Posterior vena cava (tissue), 2 donors: ENCODE measurements at regions of chr10 and their contacts with region 1.

Region 1: DNA sequence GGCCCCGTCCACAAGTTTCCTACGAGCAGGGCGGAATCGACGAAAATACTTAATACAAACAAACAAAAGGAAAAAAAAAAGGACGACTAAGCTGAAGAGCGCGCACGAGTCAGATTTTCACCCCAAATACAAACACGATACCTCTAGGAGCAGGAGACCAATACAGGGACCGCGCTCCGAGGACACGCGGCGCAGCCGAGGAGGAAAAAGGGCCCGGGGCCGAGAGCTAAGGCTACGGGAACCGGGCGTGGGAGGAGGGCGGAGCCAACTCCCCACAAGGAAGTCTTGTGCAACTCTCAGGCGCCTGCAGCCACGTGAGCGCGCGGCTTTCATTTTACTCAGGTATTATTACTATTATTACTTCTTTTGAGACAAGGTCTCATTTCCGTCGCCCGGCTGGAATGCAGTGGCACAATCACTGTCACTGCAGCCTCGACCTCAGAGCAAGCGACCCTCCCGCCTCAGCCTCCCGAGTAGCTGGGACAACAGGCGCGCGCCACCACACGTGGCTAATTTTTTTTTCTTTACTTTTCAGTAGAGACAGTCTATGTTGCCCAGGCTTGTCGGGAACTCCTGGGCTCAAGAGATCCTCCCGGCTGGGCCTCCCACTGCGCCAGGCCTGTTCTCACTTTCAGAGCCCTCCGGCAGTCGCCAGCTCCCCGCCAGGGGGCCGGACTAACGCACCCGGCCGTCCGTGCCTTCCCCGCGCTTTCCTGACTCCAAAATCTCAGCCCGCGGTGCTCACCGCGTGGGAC is 1.2 kb downstream of the HNRNPF start:
- DNase-seq: peak; percentile 98

Region 2: GRCh38 chr10:43427166-43427825 is 19.5 kb after region 1 on chr10:
- intact Hi-C with region 1: no loop called
- DNase-seq: no peak

Region 3: DNA sequence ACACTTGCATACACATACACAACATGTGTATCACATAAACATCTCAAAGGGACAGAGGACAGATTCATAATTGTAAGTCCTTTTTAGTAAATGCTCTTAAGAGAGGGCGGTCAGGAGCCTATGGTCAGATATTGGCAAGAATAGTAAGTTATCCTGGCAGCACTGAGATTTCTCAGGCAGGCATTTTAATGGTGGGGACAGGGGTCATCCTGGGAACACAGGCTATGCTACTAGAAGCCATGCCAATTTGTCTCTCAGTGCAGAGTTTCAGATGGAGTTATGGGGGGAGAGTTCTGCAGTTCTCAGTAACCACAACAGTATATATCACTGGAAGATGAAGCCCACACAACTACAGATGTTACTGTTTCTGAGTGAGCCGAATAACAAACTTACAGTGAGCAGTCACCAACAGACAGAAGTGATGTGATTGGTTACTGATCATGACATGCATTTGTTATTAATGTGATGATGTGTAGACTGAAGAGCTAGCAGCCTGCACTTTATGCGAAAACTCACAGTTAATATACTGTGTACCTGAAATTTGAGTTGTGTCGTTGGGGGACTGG is 45.6 kb after region 1 on chr10:
- intact Hi-C with region 1: loop called in 1 of 2 experiments (anchors 5 kb)
- DNase-seq: peak; percentile 16